Ascending aorta (tissue), 2 donors: ENCODE measurements at regions of chr16 and their contacts with region 1.

Region 1: GRCh38 chr16:67393035-67393787 is at the start of gene TPPP3:
- DNase-seq: peak; percentile 50 to 91
- H3K4me3 ChIP-seq: peak within 1 kb of the TSS; percentile 45 to 58
- H3K27ac ChIP-seq: peak within 1 kb of the TSS; percentile 49 to 52
- H3K4me1 ChIP-seq: peaks cover 15 to 25% of the 10 kb centered on the region in 2 donors
- H3K27me3 ChIP-seq: peaks cover 15% of the 10 kb centered on the region
- CTCF ChIP-seq: peak; percentile 62 to 72 (median 69)
- total RNA-seq, gene TPPP3: 2.8 TPM

Region 2: DNA sequence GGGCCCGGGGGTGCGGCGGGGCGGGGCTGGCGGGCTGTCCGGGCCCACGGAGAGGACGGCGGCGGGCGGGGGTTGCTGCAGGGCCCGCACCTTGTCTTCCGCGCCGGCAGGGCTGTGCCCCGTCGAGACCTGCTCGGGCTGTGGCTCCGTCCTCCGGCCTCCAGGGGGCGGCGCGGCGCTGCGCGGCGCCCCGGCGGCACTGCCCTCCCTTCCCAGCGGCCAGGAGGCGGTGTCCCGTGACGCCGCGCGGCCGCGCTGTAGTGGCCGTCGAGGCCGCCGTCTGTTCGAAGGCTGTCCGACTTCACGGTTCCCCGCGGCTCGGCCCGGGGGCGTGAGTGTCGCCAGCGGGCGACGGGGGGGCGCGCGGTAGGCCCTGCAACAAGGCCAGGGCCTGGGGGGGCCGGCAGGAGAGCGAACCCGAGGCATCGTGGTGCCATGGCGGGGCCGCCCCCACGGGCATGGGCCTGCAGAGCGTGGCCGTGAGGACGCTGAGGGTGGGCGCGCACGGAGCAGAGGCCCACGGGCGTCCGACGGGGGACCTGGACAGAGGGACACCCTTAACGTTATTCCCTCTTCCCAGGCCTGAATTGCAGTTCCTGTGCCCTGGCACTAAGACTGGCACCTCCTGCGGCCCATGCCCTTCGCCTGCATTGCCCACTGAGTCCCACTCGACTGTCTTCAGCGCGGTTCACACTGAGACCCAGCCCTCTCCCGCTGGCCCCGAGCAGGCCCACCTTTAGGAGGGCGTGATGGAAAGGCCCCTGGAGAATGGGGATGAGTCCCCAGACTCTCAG is 113.7 kb before region 1 on chr16 and contains the start of gene PLEKHG4:
- intact Hi-C with region 1: loop called (anchors 10 kb)
- DNase-seq: peak; percentile 29 to 78
- H3K4me3 ChIP-seq: peak within 1 kb of the TSS; percentile 54 to 67
- H3K27ac ChIP-seq: peak within 1 kb of the TSS; percentile 79 to 82
- H3K4me1 ChIP-seq: peaks cover 3 to 15% of the 10 kb centered on the region in 2 donors
- H3K27me3 ChIP-seq: no peaks in the 10 kb centered on the region
- CTCF ChIP-seq: peak; percentile 25 to 84 (median 47)
- total RNA-seq, gene PLEKHG4: 3.7 TPM